ENCODE measurements at regions of chr1 and their contacts with region 1.

Region 1: DNA sequence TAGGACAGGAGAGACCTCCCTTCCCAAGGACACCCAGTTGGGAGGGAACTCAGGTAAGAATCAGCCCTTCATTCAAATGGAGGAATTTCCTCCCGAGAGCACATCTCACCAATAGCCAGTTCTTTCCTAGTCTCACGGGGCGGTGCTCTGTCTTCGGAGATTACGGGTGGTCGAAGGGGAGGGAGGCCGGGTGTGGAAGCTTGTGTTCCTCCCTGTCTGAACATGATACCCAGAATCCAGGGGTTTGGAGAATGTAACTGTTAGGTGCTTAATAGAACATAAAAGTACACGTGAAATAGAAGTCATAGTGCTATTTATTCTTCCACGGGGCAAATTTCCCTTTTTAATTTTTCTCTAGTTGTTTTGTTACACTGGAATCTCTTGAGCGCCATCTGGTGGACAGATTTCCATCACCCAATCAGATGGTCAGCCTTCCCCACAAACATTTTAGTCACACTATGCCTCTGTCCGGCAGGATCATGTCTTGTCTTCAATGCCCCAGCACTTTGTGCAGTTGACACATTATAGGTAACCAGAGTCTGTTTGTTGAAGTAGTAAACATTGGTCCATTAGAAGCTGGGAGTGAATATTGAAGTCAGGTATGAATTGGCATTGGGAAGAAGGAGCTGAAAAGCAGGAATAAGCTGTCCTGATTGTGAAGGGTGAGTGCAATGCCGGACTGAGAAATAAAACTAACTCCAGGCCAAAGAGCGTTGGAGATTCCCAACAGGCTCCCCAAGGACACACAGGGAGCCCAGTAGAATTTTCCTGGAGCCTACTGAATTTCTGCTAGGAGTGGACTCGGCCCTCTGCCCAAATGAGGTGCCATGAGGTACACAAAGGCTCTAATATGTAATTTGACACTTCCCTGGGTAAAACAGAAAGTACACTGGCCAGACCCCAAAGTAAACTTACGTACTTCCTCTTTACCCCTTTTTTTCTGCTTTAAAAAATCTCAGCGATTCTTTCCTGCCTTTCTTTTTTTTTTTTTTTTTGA is 27.6 kb upstream of the ZNF697 start:
- DNase-seq: peak; percentile 28 to 94 (median 74)
- H3K4me3 ChIP-seq: peak overlapping the region; percentile 20 to 75 (median 56)
- H3K27ac ChIP-seq: peak overlapping the region in 32 of 59 donors; percentile 2 to 87 (median 62)
- H3K27me3 ChIP-seq: no peaks in the 10 kb centered on the region
- CTCF ChIP-seq: peak; percentile 78 to 97 (median 93)

Region 2: GRCh38 chr1:119549719-119550132 is 125.9 kb before region 1 on chr1:
- intact Hi-C with region 1: loop called in 1 of 2 experiments (anchors 5 kb)
- DNase-seq: peak in 8 of 10 donors; percentile 29 to 71 (median 56)
- H3K4me3 ChIP-seq: no peak overlapping the region
- H3K27ac ChIP-seq: peak overlapping the region in 8 of 59 donors; percentile 1 to 48 (median 23)
- H3K27me3 ChIP-seq: no peaks in the 10 kb centered on the region
- CTCF ChIP-seq: peak in 54 of 56 donors; percentile 40 to 74 (median 62)

Region 3: DNA sequence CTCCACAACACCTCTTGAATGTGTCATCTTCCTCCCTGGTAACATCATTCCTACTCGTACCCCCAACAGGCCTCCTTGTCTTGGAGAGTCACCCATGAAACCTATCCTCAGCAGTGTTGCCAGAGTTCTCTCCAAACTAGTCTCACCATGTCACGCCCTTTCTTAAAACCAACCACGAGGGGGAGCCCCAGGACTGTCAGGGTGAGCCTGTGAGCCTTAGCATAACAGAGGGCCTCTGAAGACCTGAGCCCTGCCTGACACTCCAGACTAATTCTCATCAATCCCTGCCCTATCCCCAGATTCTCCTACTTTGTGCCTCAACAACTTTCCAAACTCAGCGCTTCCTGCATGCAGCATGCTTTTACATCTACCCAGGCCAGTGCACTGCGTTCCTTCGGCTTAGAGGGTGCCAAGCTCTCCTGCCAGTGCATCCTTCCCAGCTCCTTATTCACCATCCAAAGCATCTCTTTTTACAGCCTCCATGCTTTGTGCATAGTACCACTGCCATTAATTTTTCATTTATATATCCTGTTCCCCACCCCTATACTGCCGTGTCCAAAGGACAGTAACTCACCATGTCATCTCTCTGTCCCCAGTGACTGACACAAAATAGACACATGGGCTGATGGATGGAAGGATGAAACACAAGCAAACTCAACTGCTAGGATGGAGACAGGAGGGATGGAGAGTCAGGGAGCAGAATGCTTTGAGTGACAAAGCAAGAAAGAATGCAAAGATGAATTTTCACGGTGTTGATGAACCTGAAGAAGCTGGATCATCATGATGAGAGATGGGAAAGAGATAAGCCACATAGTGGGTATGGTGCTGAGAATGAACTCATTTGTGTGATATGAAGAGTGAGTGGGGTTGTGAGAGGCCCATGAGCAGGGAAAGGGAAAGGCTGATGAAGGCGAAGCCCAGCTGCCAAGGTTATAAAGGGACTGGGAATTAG is 61.6 kb before region 1 on chr1:
- intact Hi-C with region 1: loop called in 1 of 2 experiments (anchors 5 kb)
- DNase-seq: peak; percentile 62 to 90 (median 79)
- H3K4me3 ChIP-seq: no peak overlapping the region
- H3K27ac ChIP-seq: peak overlapping the region in 1 of 59 donors; percentile 26
- H3K27me3 ChIP-seq: no peaks in the 10 kb centered on the region
- CTCF ChIP-seq: peak; percentile 44 to 96 (median 84)

Region 4: GRCh38 chr1:119711804-119712341 is 36.2 kb after region 1 on chr1 and contains the start of gene PHGDH:
- intact Hi-C with region 1: loop called in 1 of 2 experiments (anchors 5 kb)
- DNase-seq: peak; percentile 13 to 74 (median 62)
- H3K4me3 ChIP-seq: peak within 1 kb of the TSS; percentile 59 to 84 (median 70)
- H3K27ac ChIP-seq: peak within 1 kb of the TSS in 58 of 59 donors; percentile 21 to 93 (median 82)
- H3K27me3 ChIP-seq: no peaks in the 10 kb centered on the region
- CTCF ChIP-seq: peak in 2 of 56 donors; percentile 5 to 8
- total RNA-seq, gene PHGDH: 57.0 to 255 (median 124) TPM

Region 5: GRCh38 chr1:119743781-119744597 is 68.3 kb after region 1 on chr1:
- intact Hi-C with region 1: loop called in 1 of 2 experiments (anchors 10 kb)
- DNase-seq: peak in 9 of 10 donors; percentile 47 to 78 (median 69)
- H3K4me3 ChIP-seq: no peak overlapping the region
- H3K27ac ChIP-seq: peak overlapping the region in 51 of 59 donors; percentile 1 to 97 (median 64)
- H3K27me3 ChIP-seq: no peaks in the 10 kb centered on the region
- CTCF ChIP-seq: peak; percentile 67 to 92 (median 84)

Region 6: GRCh38 chr1:119906927-119907652 is 231.4 kb after region 1 on chr1:
- intact Hi-C with region 1: no loop called
- DNase-seq: no peak
- H3K4me3 ChIP-seq: no peak overlapping the region
- H3K27ac ChIP-seq: no peak overlapping the region
- H3K27me3 ChIP-seq: no peaks in the 10 kb centered on the region
- CTCF ChIP-seq: no peak